Adrenal gland (tissue), 19 donors: ENCODE measurements at regions of chr5 and their contacts with region 1.

Region 1: GRCh38 chr5:14644623-14645237 is 19.8 kb upstream of the OTULIN start:
- DNase-seq: no peak
- H3K4me3 ChIP-seq: no peak overlapping the region
- H3K27ac ChIP-seq: no peak overlapping the region
- H3K4me1 ChIP-seq: peaks cover 0 to 3% of the 10 kb centered on the region in 2 donors
- H3K27me3 ChIP-seq: no peaks in the 10 kb centered on the region
- CTCF ChIP-seq: no peak
- POLR2A ChIP-seq: no peak

Region 2: GRCh38 chr5:14351845-14352712 is 292.7 kb before region 1 on chr5:
- intact Hi-C with region 1: loop called in 1 of 2 experiments (anchors 10 kb)
- DNase-seq: peak; percentile 53 to 87 (median 68)
- H3K4me3 ChIP-seq: no peak overlapping the region
- H3K27ac ChIP-seq: no peak overlapping the region
- H3K4me1 ChIP-seq: peaks cover 0 to 8% of the 10 kb centered on the region in 2 donors
- H3K27me3 ChIP-seq: no peaks in the 10 kb centered on the region
- CTCF ChIP-seq: peak; percentile 74 to 92 (median 86)
- POLR2A ChIP-seq: no peak

Region 3: GRCh38 chr5:15003511-15003920 is 358.8 kb after region 1 on chr5:
- intact Hi-C with region 1: no loop called
- DNase-seq: peak; percentile 46 to 83 (median 67)
- H3K4me3 ChIP-seq: no peak overlapping the region
- H3K27ac ChIP-seq: no peak overlapping the region
- H3K4me1 ChIP-seq: peaks cover 4 to 5% of the 10 kb centered on the region in 2 donors
- H3K27me3 ChIP-seq: no peaks in the 10 kb centered on the region
- CTCF ChIP-seq: peak; percentile 67 to 83 (median 76)
- POLR2A ChIP-seq: no peak